Naive thymus-derived CD8-positive, alpha-beta T cell (primary cell): ENCODE measurements at regions of chr10 and their contacts with region 1.

Region 1: GRCh38 chr10:1048732-1049424 is at the start of gene IDI1:
- DNase-seq: peak; percentile 94 to 98 (median 96)
- ATAC-seq: peak; percentile 81 to 83
- H3K4me3 Mint-ChIP-seq: peak within 1 kb of the TSS; percentile 91 to 97 (median 94)
- H3K27ac Mint-ChIP-seq: peak within 1 kb of the TSS; percentile 94 to 99 (median 98)
- H3K4me1 Mint-ChIP-seq: peaks cover 24 to 76% (median 67%) of the 10 kb centered on the region in 4 donors
- H3K27me3 Mint-ChIP-seq: no peaks in the 10 kb centered on the region
- polyA plus RNA-seq, gene IDI1: 31.0 to 53.5 (median 33.9) TPM

Region 2: GRCh38 chr10:987870-988666 is 60.8 kb before region 1 on chr10 and contains the start of gene GTPBP4:
- POLR2A ChIA-PET with region 1: interaction called, 12 read pairs
- DNase-seq: peak; percentile 87 to 99 (median 96)
- ATAC-seq: peak; percentile 96 to 98
- H3K4me3 Mint-ChIP-seq: peak within 1 kb of the TSS; percentile 90 to 99 (median 96)
- H3K27ac Mint-ChIP-seq: peak within 1 kb of the TSS; percentile 88 to 99 (median 98)
- H3K4me1 Mint-ChIP-seq: peaks cover 17 to 49% (median 45%) of the 10 kb centered on the region in 4 donors
- H3K27me3 Mint-ChIP-seq: no peaks in the 10 kb centered on the region
- polyA plus RNA-seq, gene GTPBP4: 22.7 to 29.8 (median 25.9) TPM

Region 3: DNA sequence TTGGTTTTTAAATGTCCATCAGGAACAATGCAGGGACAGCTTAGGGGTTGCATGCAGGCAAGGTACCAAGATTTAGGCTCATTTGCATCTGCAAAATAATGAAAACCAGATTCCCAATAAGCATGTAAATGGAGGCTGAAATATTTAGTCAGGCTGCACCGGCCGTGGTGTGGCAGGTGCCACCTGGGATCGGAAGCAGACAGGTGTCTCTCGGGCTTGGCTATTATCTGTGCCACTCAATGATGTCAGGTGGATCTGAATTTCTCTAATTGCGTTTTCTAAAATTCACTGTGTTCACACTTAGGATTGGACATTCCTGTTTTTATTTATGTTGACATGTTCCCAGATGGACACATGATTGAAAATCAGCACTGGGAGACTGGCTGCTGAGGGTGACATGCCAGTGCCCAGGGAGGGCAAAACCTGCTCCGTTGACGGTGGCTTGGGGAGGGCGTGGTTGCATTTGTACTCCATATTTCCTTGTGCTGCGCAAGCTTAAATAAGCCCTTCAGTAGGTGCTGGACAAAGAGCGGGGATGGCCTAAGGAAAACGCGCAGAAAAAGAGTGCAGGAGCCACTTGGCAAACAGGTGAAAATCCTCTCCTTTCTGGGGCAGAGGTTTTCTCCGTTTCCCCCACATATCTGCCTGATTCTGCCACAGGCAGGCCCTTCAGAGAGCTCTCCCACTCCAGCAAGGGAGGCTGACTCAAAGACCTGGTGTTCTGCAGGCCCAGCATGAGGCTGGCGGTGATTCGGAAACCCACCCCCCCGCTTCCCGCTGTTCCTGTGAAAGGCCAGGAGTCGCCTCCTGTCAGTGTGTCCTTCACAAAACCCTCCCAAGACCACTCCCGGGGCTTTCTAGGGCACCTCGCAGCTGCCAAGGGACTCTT is 149.8 kb after region 1 on chr10:
- POLR2A ChIA-PET with region 1: no interaction called
- DNase-seq: no peak
- ATAC-seq: no peak
- H3K4me3 Mint-ChIP-seq: no peak overlapping the region
- H3K27ac Mint-ChIP-seq: no peak overlapping the region
- H3K4me1 Mint-ChIP-seq: peaks cover 8 to 10% (median 9%) of the 10 kb centered on the region in 4 donors
- H3K27me3 Mint-ChIP-seq: peaks cover 0 to 5% (median 0%) of the 10 kb centered on the region in 5 donors